ENCODE measurements at regions of chr14 and their contacts with region 1.

Region 1: DNA sequence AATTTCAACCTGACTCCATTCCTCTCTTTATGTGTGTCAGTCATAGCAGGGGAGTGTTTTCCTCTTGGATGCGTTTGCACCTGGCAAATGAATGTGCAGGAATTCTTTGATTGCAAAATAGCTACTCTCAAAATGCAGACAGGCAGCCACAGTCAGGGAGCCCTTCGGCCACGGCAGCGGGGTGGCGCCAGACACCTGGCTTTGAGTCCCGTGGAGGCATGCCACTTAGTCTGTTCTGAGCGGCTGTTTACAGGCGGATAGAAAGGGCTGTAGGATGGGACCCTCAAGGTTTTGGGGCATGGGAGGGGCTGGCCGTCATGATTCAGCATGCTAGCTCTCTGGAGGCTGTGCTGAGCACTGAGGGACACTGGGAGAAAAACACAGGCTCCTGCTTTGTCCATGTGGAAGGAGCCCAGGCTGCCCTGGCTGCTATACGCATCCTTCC is 117.1 kb downstream of the SLC25A47 start:
- DNase-seq: no peak
- H3K4me3 ChIP-seq: no peak overlapping the region
- H3K27ac ChIP-seq: peak overlapping the region in 2 of 4 donors; percentile 6 to 12
- H3K4me1 ChIP-seq: peaks cover 13 to 34% (median 29%) of the 10 kb centered on the region in 4 donors
- H3K27me3 ChIP-seq: no peaks in the 10 kb centered on the region
- CTCF ChIP-seq: peak; percentile 39 to 54 (median 53)
- EP300 ChIP-seq: no peak
- POLR2A ChIP-seq: no peak

Region 2: DNA sequence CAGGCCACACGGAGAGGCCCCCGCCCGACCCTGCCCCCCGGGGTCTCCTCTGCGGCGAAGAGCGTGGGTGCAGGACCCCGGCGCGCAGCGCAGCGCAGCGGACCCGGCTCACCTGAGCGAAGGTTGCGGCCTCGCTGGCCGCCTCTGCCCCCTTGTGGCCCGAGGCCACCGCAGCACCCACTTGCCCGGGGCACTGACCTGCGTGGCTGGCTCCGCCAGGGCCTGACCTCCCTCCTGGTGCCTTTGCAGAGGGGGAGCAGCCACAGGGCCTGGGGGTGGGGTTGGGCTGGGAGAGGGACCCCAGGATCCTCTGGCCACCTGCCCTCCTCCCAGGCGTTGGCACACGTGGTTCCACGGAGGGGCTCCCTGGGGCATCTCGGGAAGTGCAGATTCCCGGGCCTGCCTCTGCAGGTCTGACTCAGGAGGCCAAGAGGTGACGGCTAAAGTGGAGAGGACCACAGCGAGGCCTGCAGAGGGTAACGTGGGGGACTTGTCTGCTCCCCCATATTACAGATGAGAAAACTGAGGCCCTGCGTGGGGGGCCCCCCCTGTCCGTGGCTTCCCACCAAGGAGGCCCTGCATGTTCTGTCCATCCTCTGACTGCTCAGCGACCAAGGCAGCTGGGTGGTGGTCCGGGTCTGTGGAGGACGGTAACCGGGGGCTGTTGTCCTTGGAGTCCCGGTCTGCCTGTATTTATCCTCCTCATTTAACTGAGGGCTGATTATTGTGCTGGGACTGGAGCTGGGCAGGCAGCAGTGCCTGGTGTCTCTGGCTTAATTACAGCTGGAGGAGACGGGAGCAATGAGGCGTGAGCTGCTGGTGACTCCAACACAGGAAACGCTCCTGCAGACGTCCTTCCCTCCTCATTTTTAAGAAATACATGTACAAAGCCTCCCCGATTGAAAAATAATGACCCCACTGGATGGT is 214.9 kb after region 1 on chr14:
- intact Hi-C with region 1: loop called (anchors 5 kb)
- DNase-seq: no peak
- H3K4me3 ChIP-seq: peak overlapping the region in 2 of 4 donors; percentile 23 to 32
- H3K27ac ChIP-seq: no peak overlapping the region
- H3K4me1 ChIP-seq: peaks cover 0 to 8% (median 6%) of the 10 kb centered on the region in 4 donors
- H3K27me3 ChIP-seq: peaks cover 0 to 40% (median 12%) of the 10 kb centered on the region in 4 donors
- CTCF ChIP-seq: peak; percentile 38 to 67 (median 43)
- EP300 ChIP-seq: no peak
- POLR2A ChIP-seq: no peak

Region 3: GRCh38 chr14:100979780-100980179 is 539.6 kb after region 1 on chr14:
- intact Hi-C with region 1: loop called (anchors 5 kb)
- DNase-seq: no peak
- H3K4me3 ChIP-seq: no peak overlapping the region
- H3K27ac ChIP-seq: no peak overlapping the region
- H3K4me1 ChIP-seq: no peaks in the 10 kb centered on the region
- H3K27me3 ChIP-seq: no peaks in the 10 kb centered on the region
- CTCF ChIP-seq: no peak
- EP300 ChIP-seq: no peak
- POLR2A ChIP-seq: no peak

Measured in esophagus muscularis mucosa (tissue), 4 donors.